WTC11 (cell line): ENCODE measurements at regions of chr17 and their contacts with region 1.

Region 1: DNA sequence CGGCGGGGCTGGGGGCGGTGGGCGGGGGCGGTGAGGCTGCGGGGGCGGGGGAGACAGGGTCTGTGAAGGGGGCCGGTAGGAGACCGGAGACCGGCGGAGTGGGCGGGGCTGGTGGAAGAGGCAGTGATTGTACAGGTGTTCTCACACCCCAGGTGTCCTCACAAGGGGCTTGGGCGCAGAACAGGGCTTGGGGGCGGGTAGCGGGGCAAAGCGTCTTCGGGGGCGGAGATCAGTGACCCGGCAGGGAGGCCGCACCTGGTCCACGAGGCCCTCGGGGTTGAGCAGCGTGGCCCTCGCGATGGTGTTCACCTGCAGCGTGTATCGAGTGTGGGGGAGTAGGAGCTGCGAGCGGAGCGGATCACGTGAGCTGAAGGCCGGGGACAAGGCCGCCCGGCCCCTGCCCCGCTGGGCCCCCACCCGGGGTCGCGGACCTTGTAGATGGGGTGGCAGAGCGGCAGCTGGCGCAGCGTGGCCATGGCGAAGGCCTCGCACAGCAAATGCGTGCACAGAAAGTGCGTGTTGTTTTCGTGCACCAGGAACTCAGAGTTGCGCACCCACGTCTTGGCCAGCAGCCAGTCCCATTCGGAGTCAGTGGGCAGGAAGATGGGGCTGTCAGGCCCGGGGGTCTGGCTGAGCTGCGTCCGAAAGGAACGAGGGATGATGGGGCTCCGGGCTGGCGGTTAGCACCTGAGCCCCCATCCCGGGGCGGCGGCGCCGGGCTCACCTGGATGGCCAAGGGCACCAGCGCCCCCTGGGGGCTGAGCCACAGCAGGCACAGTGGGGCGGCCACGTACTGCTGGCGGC is 8.5 kb downstream of the ALOXE3 start:
- DNase-seq: peak; percentile 90
- ATAC-seq: peak; percentile 87
- H3K4me3 Mint-ChIP-seq: peak overlapping the region; percentile 71
- H3K27ac Mint-ChIP-seq: no peak overlapping the region
- H3K4me1 Mint-ChIP-seq: peaks cover 4% of the 10 kb centered on the region; the same call in 1 of the 2 replicates
- H3K27me3 Mint-ChIP-seq: peaks cover 79% of the 10 kb centered on the region
- CTCF ChIP-seq: peak; percentile 85

Region 2: DNA sequence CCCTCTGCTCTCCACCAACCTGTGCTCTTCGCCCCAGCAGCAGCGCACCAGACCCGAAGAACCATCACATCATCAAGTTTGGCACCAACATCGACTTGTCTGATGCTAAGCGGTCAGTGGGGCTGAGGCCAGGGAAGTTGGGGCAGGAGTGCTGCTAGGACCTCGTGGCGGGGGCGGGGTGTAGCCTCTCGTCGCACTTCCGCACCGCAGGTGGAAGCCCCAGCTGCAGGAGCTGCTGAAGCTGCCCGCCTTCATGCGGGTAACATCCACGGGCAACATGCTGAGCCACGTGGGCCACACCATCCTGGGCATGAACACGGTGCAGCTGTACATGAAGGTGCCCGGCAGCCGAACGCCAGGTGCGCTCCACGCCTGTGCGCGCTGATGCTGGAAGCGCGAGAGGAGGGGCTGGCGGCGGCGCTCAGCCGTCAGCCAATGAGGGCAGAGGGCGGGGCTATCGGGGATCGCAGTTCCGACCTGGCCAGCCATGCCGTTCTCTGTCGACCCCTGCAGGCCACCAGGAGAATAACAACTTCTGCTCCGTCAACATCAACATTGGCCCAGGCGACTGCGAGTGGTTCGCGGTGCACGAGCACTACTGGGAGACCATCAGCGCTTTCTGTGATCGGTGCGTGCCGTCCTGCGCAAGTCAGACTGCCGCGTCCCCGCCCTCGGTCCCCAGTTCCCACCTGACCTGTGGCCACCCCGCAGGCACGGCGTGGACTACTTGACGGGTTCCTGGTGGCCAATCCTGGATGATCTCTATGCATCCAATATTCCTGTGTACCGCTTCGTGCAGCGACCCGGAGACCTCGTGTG is 258.2 kb before region 1 on chr17:
- CTCF ChIA-PET with region 1: no interaction called
- POLR2A ChIA-PET with region 1: no interaction called
- DNase-seq: peak; percentile 96
- ATAC-seq: peak; percentile 75
- H3K4me3 Mint-ChIP-seq: peak overlapping the region; percentile 81
- H3K27ac Mint-ChIP-seq: no peak overlapping the region
- H3K4me1 Mint-ChIP-seq: peaks cover 30% of the 10 kb centered on the region
- H3K27me3 Mint-ChIP-seq: peaks cover 30% of the 10 kb centered on the region
- CTCF ChIP-seq: peak; percentile 95

Region 3: DNA sequence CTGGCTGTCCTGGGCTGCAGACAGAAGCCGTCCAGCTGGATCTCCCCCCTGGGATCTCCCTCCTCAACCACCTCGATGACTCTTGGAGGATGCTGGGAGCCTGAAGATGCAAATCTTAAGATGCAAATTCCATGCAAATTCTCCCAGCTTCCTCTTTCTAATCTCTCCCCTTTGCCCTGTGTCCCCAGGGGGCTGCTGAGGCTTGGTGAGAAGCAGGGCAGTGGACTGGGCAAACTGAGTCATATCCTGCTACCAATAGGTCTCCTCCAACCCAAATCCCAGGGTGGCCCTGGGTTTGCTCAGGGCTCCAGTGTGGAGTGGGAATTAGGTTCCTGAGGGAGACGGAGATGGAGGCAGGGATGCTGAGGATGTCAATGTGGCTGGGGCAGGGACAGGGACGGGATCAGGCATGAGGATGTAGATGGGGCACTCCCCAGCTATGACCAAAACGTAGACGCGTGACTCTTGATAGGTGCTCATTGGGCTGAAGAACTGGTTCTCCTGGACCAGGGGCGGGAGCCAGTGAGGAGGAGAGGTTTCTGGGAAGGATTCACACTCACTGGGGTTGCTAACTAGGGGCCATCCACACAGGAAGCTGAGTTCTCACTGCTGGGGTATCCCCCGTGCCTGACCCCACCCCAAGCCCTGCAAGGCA is 18.7 kb before region 1 on chr17:
- CTCF ChIA-PET with region 1: interaction called, 127 read pairs
- POLR2A ChIA-PET with region 1: no interaction called
- DNase-seq: no peak
- ATAC-seq: no peak; the same call in 1 of the 2 replicates
- H3K4me3 Mint-ChIP-seq: no peak overlapping the region
- H3K27ac Mint-ChIP-seq: no peak overlapping the region
- H3K4me1 Mint-ChIP-seq: peaks cover 16% of the 10 kb centered on the region
- H3K27me3 Mint-ChIP-seq: peaks cover 34% of the 10 kb centered on the region
- CTCF ChIP-seq: no peak

Region 4: DNA sequence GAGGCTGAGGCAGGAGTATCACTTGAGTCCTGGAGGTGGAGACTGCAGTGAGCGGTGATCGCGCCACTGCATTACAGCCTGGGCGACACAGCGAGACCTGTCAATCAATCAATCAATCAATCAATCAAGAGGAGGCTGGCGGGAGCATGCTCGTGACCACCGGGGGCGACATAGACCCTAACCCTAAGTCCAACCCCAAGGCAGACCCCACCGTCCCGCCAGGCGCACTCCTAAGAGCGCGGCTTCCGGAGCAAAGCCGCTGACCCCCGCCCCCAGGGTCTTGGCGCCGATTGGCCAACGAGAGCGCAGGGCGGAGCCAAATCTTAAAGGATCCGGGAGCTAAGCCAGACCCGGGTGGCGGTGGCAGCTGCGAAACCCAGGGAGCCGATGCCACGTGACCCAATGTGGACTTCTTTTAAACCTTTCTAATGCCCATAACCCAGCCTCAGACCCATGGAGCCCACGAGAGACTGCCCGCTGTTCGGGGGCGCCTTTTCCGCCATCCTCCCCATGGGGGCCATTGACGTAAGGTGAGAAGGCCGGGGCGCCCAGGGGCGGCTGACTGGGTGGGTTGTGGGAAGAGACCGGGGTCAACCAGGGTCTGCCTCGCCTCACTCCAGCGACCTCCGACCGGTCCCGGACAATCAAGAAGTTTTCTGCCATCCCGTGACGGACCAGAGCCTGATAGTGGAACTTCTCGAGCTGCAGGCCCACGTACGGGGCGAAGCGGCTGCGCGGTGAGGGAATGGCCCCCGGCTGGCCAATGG is 178.7 kb after region 1 on chr17 and contains the start of gene RANGRF:
- CTCF ChIA-PET with region 1: no interaction called
- POLR2A ChIA-PET with region 1: no interaction called
- DNase-seq: peak; percentile 90
- ATAC-seq: peak; percentile 90
- H3K4me3 Mint-ChIP-seq: peak within 1 kb of the TSS; percentile 92
- H3K27ac Mint-ChIP-seq: peak within 1 kb of the TSS; percentile 92
- H3K4me1 Mint-ChIP-seq: peaks cover 28% of the 10 kb centered on the region
- H3K27me3 Mint-ChIP-seq: no peaks in the 10 kb centered on the region; the same call in 1 of the 2 replicates
- CTCF ChIP-seq: no peak
- total RNA-seq, gene RANGRF: 32.7 to 36.8 TPM (median 34.6 TPM) in 3 replicates